Heart right ventricle (tissue), 16 donors: ENCODE measurements at regions of chr5 and their contacts with region 1.

Region 1: GRCh38 chr5:151825445-151825844 is 53.7 kb downstream of the G3BP1 start:
- DNase-seq: peak in 1 of 2 donors; percentile 70
- ATAC-seq: peak; percentile 83 to 95 (median 91)
- H3K4me3 ChIP-seq: no peak overlapping the region
- H3K27ac ChIP-seq: no peak overlapping the region
- H3K4me1 ChIP-seq: peaks cover 0 to 21% (median 2%) of the 10 kb centered on the region in 9 donors
- H3K27me3 ChIP-seq: no peaks in the 10 kb centered on the region
- CTCF ChIP-seq: peak; percentile 71 to 93 (median 89)

Region 2: GRCh38 chr5:152142840-152143469 is 317.5 kb after region 1 on chr5:
- intact Hi-C with region 1: loop called (anchors 1 to 5 kb)
- DNase-seq: peak; percentile 29 to 40
- ATAC-seq: peak in 7 of 8 donors; percentile 55 to 83 (median 64)
- H3K4me3 ChIP-seq: no peak overlapping the region
- H3K27ac ChIP-seq: no peak overlapping the region
- H3K4me1 ChIP-seq: peaks cover 0 to 5% (median 0%) of the 10 kb centered on the region in 9 donors
- H3K27me3 ChIP-seq: peaks cover 0 to 4% (median 0%) of the 10 kb centered on the region in 7 donors
- CTCF ChIP-seq: peak; percentile 66 to 92 (median 87)

Region 3: DNA sequence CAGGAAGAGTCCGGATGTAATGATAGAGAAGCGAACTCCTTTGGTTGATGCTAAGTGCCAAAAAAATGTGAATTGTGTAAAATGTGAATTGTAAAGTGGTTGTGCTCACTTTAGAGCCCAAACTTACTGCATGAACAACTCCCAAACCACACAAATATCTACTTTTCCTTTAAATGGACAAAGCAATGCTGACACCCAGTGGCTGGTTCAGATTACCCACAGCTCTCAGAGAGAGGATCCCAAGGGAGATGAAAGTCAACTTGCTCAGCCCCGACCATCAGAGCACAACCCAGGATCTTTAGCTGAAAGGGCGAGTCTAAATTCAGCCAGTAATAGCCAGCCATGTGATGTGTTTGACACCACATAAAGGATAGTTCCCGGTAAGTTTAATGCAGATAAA is 446.0 kb after region 1 on chr5:
- intact Hi-C with region 1: loop called (anchors 2 to 10 kb)
- DNase-seq: peak in 1 of 2 donors; percentile 46
- ATAC-seq: peak; percentile 50 to 79 (median 74)
- H3K4me3 ChIP-seq: no peak overlapping the region
- H3K27ac ChIP-seq: peak overlapping the region in 1 of 10 donors; percentile 52
- H3K4me1 ChIP-seq: peaks cover 8 to 50% (median 30%) of the 10 kb centered on the region in 9 donors
- H3K27me3 ChIP-seq: no peaks in the 10 kb centered on the region
- CTCF ChIP-seq: peak; percentile 16 to 69 (median 54)

Region 4: DNA sequence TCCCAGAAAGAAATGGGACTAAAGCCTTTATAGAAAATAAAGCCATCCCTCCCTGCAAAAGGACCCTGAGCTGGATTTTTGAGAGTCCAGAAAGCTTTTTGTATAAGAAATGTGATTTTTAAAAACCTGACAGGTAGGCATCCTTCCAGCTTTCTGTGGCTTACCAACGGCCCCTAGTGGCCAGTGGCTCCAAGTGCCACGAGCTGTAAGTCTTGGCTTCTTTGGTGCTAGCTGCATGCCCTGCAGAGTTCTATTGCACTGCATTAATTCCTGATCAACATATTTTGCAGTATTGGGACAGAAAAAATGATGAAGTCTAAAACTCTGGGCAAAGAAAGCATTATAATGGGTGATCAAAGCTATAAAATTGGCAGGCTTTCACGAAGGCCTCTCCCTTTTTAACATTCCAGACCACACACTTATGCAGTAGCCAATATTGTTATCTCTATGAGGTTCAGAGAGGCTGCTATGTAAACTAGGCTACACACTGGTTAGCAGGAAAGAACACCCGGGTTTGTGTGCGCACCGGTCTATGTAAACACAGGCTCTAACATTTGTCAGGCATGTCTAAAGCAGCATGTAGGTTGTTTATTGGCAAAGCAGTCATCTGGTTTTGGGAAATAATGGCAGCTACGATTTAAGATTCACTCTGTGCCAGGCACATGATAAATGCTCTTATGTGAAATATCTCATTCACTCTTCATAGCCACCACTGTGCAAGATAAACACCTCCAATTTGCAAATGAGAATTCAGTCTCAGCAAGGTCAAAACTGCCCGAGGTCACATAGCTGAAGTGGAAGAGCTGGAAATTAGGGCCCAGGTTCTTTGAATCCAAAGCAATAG is 524.5 kb after region 1 on chr5:
- intact Hi-C with region 1: loop called in 5 of 10 experiments (anchors 5 to 10 kb)
- DNase-seq: peak; percentile 10 to 28
- ATAC-seq: peak in 6 of 8 donors; percentile 50 to 85 (median 72)
- H3K4me3 ChIP-seq: no peak overlapping the region
- H3K27ac ChIP-seq: peak overlapping the region in 1 of 10 donors; percentile 20
- H3K4me1 ChIP-seq: peaks cover 0 to 11% (median 5%) of the 10 kb centered on the region in 9 donors
- H3K27me3 ChIP-seq: no peaks in the 10 kb centered on the region
- CTCF ChIP-seq: peak; percentile 59 to 83 (median 76)

Region 5: DNA sequence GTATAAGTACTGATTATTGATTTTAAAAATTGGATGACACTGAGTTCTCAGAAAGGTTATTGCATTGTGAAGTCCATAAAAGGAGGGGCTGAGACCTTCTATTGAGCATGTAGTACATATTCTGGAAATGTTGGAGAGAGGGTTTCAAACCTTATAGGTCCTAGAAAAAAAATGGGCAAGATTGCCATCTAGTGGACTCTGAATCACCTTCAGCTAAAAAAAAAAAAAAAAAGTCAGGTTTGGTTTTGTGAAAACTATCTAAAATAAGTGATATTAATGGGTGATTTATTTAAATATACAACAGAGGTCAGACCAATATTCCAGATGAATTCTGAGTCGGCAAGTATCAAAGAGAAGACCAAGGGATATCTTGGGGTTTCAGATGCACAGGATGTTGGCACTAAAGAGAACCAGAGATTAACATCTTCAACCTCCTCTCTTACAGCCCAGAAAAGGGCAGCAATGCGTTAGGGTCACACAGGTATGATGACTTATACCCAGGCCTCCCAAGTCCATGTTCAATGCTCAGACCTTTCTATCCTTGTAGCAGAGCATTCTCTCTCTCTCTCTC is 689.5 kb after region 1 on chr5:
- intact Hi-C with region 1: loop called in 4 of 10 experiments (anchors 2 to 5 kb)
- DNase-seq: no peak
- ATAC-seq: peak in 1 of 8 donors; percentile 31
- H3K4me3 ChIP-seq: no peak overlapping the region
- H3K27ac ChIP-seq: no peak overlapping the region
- H3K4me1 ChIP-seq: peaks cover 0 to 15% (median 0%) of the 10 kb centered on the region in 9 donors
- H3K27me3 ChIP-seq: peaks cover 0 to 3% (median 0%) of the 10 kb centered on the region in 7 donors
- CTCF ChIP-seq: peak in 7 of 9 donors; percentile 27 to 59 (median 42)